ENCODE measurements at regions of chr11 and their contacts with region 1.

Region 1: DNA sequence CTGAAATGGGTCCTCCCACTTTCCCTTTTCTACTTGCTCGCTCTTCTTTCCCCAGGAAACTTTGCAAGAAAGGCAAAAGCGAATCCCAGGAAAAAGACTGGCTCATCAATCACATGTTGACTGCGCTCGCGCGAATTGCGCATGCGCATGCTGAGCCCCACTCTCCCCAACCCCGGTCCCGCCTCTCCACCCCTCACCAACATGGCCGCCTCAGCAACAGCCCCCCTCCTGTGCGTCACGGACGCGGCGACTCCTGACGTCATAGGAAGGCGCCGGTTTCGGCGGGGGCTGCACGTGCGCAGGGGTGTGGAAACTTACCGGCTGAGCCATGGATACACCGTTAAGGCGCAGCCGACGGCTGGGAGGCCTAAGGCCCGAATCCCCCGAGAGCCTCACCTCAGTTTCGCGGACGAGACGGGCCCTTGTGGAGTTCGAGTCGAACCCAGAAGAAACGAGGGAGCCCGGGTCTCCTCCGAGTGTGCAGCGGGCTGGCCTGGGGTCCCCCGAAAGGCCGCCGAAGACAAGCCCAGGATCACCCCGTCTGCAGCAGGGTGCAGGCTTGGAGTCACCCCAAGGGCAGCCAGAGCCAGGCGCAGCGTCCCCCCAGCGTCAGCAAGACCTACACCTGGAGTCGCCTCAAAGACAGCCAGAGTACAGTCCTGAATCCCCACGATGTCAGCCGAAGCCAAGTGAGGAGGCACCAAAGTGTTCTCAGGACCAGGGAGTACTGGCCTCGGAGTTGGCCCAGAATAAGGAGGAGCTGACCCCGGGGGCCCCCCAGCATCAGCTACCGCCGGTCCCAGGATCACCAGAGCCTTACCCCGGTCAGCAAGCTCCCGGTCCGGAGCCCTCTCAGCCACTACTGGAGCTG is at the start of gene CCDC86:
- DNase-seq: peak; percentile 96
- H3K4me3 ChIP-seq: peak within 1 kb of the TSS; percentile 64 to 74 (median 73)
- H3K27ac ChIP-seq: peak within 1 kb of the TSS; percentile 65
- H3K4me1 ChIP-seq: peaks cover 37% of the 10 kb centered on the region
- H3K27me3 ChIP-seq: no peaks in the 10 kb centered on the region
- CTCF ChIP-seq: no peak
- POLR2A ChIP-seq: peak; percentile 59
- total RNA-seq, gene CCDC86: 57.6 and 60.8 TPM in 2 replicates

Region 2: GRCh38 chr11:60866911-60867870 is 25.2 kb after region 1 on chr11 and contains the start of gene ZP1:
- CTCF ChIA-PET with region 1: interaction called, 3 read pairs
- POLR2A ChIA-PET with region 1: no interaction called
- dilution Hi-C with region 1: no loop called
- intact Hi-C with region 1: loop called (anchors 1 kb)
- DNase-seq: no peak
- H3K4me3 ChIP-seq: no peak within 1 kb of the TSS
- H3K27ac ChIP-seq: no peak within 1 kb of the TSS
- H3K4me1 ChIP-seq: no peaks in the 10 kb centered on the region
- H3K27me3 ChIP-seq: no peaks in the 10 kb centered on the region
- CTCF ChIP-seq: no peak
- POLR2A ChIP-seq: no peak
- total RNA-seq, gene ZP1: not detected in 2 replicates

Region 3: DNA sequence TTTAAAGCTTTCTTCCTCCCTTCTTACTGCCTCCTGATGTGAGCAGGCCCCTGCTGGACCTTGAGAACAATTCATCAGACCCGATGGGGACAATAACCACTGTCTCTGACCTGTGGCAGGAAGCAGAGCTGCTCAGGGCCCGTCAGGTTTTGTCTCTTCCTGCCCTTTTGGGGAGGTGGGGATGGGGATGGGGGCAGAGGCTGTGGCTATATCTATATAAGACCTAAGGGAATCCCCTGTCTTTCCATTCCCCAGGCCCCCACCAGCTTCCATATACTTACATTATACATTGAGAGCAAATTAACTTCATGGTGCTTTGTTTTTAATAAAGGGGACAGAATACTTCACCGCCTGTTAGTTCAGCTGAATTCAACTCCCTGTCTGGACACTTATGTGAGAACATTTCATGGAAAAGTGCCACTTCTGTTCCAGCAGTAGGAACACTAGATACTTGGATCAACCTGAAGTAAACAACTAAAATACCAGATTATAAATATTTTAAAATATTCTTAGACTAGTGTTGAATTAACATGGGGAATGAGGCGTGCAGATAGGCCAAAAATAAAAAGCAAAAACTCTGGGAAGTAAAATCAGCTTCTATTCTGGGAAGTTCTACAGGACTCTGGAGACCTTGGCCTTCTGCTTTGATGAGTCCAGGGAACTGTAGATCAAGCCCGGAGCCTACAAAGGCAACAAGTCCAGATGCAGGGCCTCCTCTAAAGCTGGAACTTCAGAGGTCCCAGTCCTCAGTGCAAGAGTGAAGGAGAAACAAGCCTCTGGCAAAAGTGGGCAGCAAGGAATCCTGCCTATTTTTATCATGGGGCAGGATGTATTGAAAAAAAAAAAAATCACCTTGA is 36.4 kb after region 1 on chr11:
- CTCF ChIA-PET with region 1: no interaction called
- POLR2A ChIA-PET with region 1: no interaction called
- dilution Hi-C with region 1: no loop called
- intact Hi-C with region 1: no loop called
- DNase-seq: no peak
- H3K4me3 ChIP-seq: no peak overlapping the region
- H3K27ac ChIP-seq: no peak overlapping the region
- H3K4me1 ChIP-seq: no peaks in the 10 kb centered on the region
- H3K27me3 ChIP-seq: no peaks in the 10 kb centered on the region
- CTCF ChIP-seq: no peak
- POLR2A ChIP-seq: no peak

Region 4: GRCh38 chr11:60913793-60914632 is 72.0 kb after region 1 on chr11 and contains the start of gene TMEM109:
- CTCF ChIA-PET with region 1: interaction called, 4 read pairs
- POLR2A ChIA-PET with region 1: no interaction called
- dilution Hi-C with region 1: no loop called
- intact Hi-C with region 1: loop called (anchors 1 kb)
- DNase-seq: peak; percentile 98
- H3K4me3 ChIP-seq: peak within 1 kb of the TSS; percentile 43 to 79 (median 76)
- H3K27ac ChIP-seq: peak within 1 kb of the TSS; percentile 65
- H3K4me1 ChIP-seq: peaks cover 36% of the 10 kb centered on the region
- H3K27me3 ChIP-seq: peaks cover 0 to 2% of the 10 kb centered on the region in 2 experiments
- CTCF ChIP-seq: no peak
- POLR2A ChIP-seq: no peak
- total RNA-seq, gene TMEM109: 172 and 192 TPM in 2 replicates

Measured in endothelial cell of umbilical vein (primary cell).